ENCODE measurements at regions of chr9 and their contacts with region 1.

Region 1: DNA sequence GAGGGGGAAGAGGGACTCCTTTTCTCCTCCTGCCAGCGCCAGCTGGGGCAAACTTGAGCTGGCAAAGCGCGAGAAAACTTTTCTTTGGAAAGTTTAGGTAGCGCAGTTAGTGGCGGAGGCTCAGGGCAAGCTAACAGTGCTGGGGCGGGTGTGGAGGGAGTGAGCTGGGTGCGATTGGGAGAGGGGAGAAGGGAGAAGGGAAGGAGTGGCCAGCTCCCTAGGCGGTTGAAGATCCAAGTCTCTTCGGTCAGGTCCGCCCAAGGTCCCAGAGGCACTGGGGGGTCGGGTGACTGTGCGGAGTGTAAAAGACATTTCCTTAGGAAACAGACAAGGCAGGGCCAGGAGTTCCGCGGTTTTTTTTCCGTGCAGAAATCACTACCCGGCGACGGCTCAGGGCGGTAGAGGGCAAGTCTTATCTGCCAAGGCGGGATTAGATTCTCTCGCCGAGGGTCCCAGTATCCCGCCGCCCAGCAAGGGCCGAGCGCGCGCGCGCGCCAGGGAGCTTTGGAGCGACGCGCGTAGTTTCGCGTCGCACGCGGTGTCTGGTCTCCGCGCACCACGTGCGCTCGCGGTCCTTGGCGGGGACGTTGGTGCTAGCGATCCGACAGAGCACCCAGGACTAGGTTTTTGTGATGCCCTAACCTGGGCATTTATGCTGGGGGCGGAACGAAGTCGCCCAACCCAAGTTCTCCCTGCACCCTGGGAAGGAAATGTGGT is 33.6 kb upstream of the NFIB start:
- DNase-seq: peak in 4 of 10 donors; percentile 23 to 61 (median 46)
- H3K4me3 ChIP-seq: peak overlapping the region; percentile 37 to 81 (median 61)
- H3K27ac ChIP-seq: peak overlapping the region in 57 of 59 donors; percentile 5 to 97 (median 88)
- H3K27me3 ChIP-seq: peaks cover 0 to 51% (median 9%) of the 10 kb centered on the region in 45 donors
- CTCF ChIP-seq: peak in 16 of 56 donors; percentile 13 to 48 (median 25)

Region 2: DNA sequence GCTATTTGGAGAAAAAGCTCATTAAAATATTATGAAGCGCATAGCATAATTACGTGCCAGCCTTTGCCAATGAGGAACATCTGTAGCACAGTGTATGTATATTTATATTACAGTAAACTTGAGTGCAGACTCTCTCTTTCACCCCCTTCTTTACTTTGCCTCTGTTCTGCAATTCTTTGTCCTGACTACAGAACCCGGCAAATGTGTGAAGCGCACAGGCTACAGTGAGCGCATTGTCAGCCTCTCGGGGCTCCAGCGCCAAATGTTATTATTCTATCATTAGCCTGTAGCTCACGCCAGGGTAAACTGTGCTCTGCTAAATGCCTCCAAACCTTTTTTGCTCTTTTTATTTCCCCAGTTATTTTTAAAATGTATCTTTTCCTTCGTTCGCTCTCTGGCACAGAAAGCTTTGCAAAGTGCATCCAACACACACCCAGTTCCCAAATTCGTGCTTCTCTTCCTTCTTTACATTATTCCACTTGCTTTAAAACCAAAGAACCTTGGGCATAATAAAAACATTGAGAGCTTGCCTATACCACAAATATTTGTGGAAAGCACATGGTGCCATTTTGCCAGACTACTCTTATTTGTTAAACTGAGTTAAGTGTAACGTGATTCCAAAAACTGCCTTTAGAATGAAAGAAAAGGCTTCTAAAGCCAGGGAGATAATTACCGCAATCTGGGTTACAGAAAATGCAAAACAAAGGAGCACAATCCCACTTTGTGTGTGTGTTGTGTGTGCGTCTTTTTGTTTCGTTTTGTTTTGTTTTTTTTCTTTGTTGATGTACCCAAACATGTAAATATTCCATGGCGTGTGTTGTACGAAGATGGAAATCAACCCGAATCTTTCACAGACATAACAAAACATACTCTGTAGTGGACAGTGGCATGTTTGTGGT is 904.0 kb before region 1 on chr9:
- intact Hi-C with region 1: loop called (anchors 5 kb)
- DNase-seq: peak in 9 of 10 donors; percentile 41 to 78 (median 57)
- H3K4me3 ChIP-seq: peak overlapping the region; percentile 11 to 70 (median 47)
- H3K27ac ChIP-seq: peak overlapping the region in 58 of 59 donors; percentile 24 to 95 (median 84)
- H3K27me3 ChIP-seq: peaks cover 0 to 8% (median 0%) of the 10 kb centered on the region in 45 donors
- CTCF ChIP-seq: peak in 3 of 56 donors; percentile 8 to 24 (median 14)

Region 3: GRCh38 chr9:14314929-14315645 is 32.5 kb before region 1 on chr9:
- intact Hi-C with region 1: loop called (anchors 2 kb)
- DNase-seq: peak; percentile 81 to 94 (median 88)
- H3K4me3 ChIP-seq: peak overlapping the region; percentile 57 to 92 (median 78)
- H3K27ac ChIP-seq: peak overlapping the region; percentile 77 to 99 (median 97)
- H3K27me3 ChIP-seq: peaks cover 0 to 9% (median 0%) of the 10 kb centered on the region in 45 donors
- CTCF ChIP-seq: peak in 7 of 56 donors; percentile 16 to 22 (median 18)

Region 4: GRCh38 chr9:14322211-14323082 is 25.1 kb before region 1 on chr9:
- intact Hi-C with region 1: loop called (anchors 2 kb)
- DNase-seq: peak; percentile 78 to 92 (median 88)
- H3K4me3 ChIP-seq: peak overlapping the region; percentile 42 to 92 (median 75)
- H3K27ac ChIP-seq: peak overlapping the region; percentile 78 to 99 (median 96)
- H3K27me3 ChIP-seq: no peaks in the 10 kb centered on the region
- CTCF ChIP-seq: peak in 52 of 56 donors; percentile 17 to 75 (median 52)